ENCODE measurements at regions of chr6 and their contacts with region 1.

Region 1: GRCh38 chr6:127539272-127539671 is 20.1 kb upstream of the MTCL3 start:
- DNase-seq: no peak
- H3K4me3 ChIP-seq: no peak overlapping the region
- H3K27ac ChIP-seq: no peak overlapping the region
- H3K4me1 ChIP-seq: no peaks in the 10 kb centered on the region
- H3K27me3 ChIP-seq: no peaks in the 10 kb centered on the region
- CTCF ChIP-seq: no peak

Region 2: GRCh38 chr6:127186889-127187288 is 352.4 kb before region 1 on chr6:
- intact Hi-C with region 1: loop called (anchors 5 kb)
- DNase-seq: peak; percentile 64
- H3K4me3 ChIP-seq: no peak overlapping the region
- H3K27ac ChIP-seq: no peak overlapping the region
- H3K4me1 ChIP-seq: no peaks in the 10 kb centered on the region
- H3K27me3 ChIP-seq: no peaks in the 10 kb centered on the region
- CTCF ChIP-seq: no peak

Measured in colonic mucosa (tissue), 4 donors.